H1 (cell line): ENCODE measurements at regions of chr7 and their contacts with region 1.

Region 1: GRCh38 chr7:140673063-140673773 is 473 bp downstream of the ADCK2 start:
- DNase-seq: peak in 1 of 2 experiments; percentile 82
- H3K4me3 ChIP-seq: peak overlapping the region; percentile 35 to 76 (median 67)
- H3K27ac ChIP-seq: no peak overlapping the region
- H3K4me1 ChIP-seq: peaks cover 0 to 6% (median 2%) of the 10 kb centered on the region in 4 experiments; a peak in 5 of 7 replicates
- H3K27me3 ChIP-seq: peaks cover 0 to 8% (median 2%) of the 10 kb centered on the region in 4 experiments; a peak in 3 of 7 replicates
- CTCF ChIP-seq: no peak
- EP300 ChIP-seq: no peak
- POLR2A ChIP-seq: no peak
- RAD21 ChIP-seq: no peak

Region 2: GRCh38 chr7:140683657-140684056 is 10.4 kb after region 1 on chr7:
- CTCF ChIA-PET with region 1: interaction called, 38 read pairs
- POLR2A ChIA-PET with region 1: no interaction called
- DNase-seq: no peak
- H3K4me3 ChIP-seq: no peak overlapping the region
- H3K27ac ChIP-seq: no peak overlapping the region
- H3K4me1 ChIP-seq: 0 out of 7 replicates have a peak, but pooled peaks cover 0 to 2% (median 0%) of the 10 kb centered on the region in 4 experiments
- H3K27me3 ChIP-seq: no peaks in the 10 kb centered on the region
- CTCF ChIP-seq: no peak
- EP300 ChIP-seq: no peak
- POLR2A ChIP-seq: no peak
- RAD21 ChIP-seq: no peak

Region 3: DNA sequence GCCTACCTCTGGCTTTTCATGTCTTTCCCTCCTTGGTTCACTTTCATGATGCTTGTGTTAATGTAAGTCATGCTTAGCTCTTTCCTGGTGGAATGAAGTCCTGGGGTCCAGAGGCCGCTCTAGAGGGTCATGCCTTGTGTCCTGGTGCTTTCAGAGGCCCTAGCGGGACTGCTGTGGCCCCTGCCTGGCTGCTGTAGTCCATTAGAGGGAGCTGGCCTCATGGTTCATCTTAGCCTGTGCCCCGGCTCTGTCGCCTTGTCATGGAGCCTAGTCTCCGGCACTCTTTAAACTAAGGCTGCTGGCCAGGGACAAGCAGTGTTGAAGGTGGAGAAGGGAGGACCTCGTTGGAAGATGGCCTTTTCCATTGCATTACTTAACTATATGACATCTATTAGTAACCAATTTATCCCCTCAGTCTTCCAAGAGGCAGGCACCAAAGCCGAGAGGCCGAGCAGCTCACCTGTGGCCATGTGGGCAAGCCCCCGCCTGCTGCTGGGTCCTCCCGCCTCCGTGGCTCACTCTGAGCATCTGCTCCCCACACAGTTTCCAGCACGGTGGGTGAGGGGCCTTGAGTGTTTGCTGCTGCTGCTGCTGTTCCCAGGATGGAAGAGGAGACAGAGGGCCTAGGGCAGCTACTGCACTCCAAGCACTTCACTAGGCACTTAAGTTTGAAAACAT is 18.3 kb after region 1 on chr7:
- CTCF ChIA-PET with region 1: interaction called, 38 read pairs
- POLR2A ChIA-PET with region 1: interaction called, 4 read pairs
- DNase-seq: no peak
- H3K4me3 ChIP-seq: no peak overlapping the region
- H3K27ac ChIP-seq: no peak overlapping the region
- H3K4me1 ChIP-seq: peaks cover 0 to 3% (median 1%) of the 10 kb centered on the region in 4 experiments; a peak in 2 of 7 replicates
- H3K27me3 ChIP-seq: no peaks in the 10 kb centered on the region
- CTCF ChIP-seq: peak; percentile 50 to 67 (median 61)
- EP300 ChIP-seq: no peak
- POLR2A ChIP-seq: no peak
- RAD21 ChIP-seq: peak; percentile 57 to 71